CD4-positive, alpha-beta memory T cell (primary cell): ENCODE measurements at regions of chr15 and their contacts with region 1.

Region 1: GRCh38 chr15:85330901-85331588 is 49.4 kb upstream of the AKAP13 start:
- DNase-seq: peak; percentile 65 to 84 (median 67)
- H3K4me3 ChIP-seq: peak overlapping the region; percentile 1 to 55
- H3K4me3 Mint-ChIP-seq: peak overlapping the region; percentile 92 to 98 (median 95)
- H3K27ac ChIP-seq: peak overlapping the region; percentile 62
- H3K27ac Mint-ChIP-seq: peak overlapping the region; percentile 78 to 96 (median 95)
- H3K4me1 ChIP-seq: peaks cover 28% of the 10 kb centered on the region
- H3K4me1 Mint-ChIP-seq: peaks cover 33 to 52% (median 44%) of the 10 kb centered on the region in 4 donors
- H3K27me3 ChIP-seq: no peaks in the 10 kb centered on the region
- H3K27me3 Mint-ChIP-seq: no peaks in the 10 kb centered on the region

Region 2: GRCh38 chr15:85296615-85297402 is 34.2 kb before region 1 on chr15:
- CTCF ChIA-PET with region 1: interaction called, 60 read pairs
- POLR2A ChIA-PET with region 1: interaction called, 17 read pairs
- intact Hi-C with region 1: loop called (anchors 1 kb)
- DNase-seq: peak; percentile 67 to 75 (median 72)
- H3K4me3 ChIP-seq: peak overlapping the region in 1 of 2 donors; percentile 20
- H3K4me3 Mint-ChIP-seq: peak overlapping the region in 7 of 8 donors; percentile 1 to 70 (median 65)
- H3K27ac ChIP-seq: no peak overlapping the region
- H3K27ac Mint-ChIP-seq: peak overlapping the region in 4 of 7 donors; percentile 24 to 73 (median 27)
- H3K4me1 ChIP-seq: peaks cover 6% of the 10 kb centered on the region
- H3K4me1 Mint-ChIP-seq: peaks cover 8 to 15% (median 10%) of the 10 kb centered on the region in 4 donors
- H3K27me3 ChIP-seq: no peaks in the 10 kb centered on the region
- H3K27me3 Mint-ChIP-seq: peaks cover 0 to under 1% of the 10 kb centered on the region in 2 donors

Region 3: GRCh38 chr15:85318048-85318731 is 12.9 kb before region 1 on chr15:
- CTCF ChIA-PET with region 1: interaction called, 59 read pairs
- POLR2A ChIA-PET with region 1: interaction called, 63 read pairs
- intact Hi-C with region 1: loop called (anchors 1 kb)
- DNase-seq: peak in 3 of 5 donors; percentile 10 to 49 (median 29)
- H3K4me3 ChIP-seq: no peak overlapping the region
- H3K4me3 Mint-ChIP-seq: peak overlapping the region in 4 of 8 donors; percentile 35 to 62 (median 51)
- H3K27ac ChIP-seq: no peak overlapping the region
- H3K27ac Mint-ChIP-seq: peak overlapping the region in 6 of 7 donors; percentile 79 to 90 (median 82)
- H3K4me1 ChIP-seq: peaks cover 42% of the 10 kb centered on the region
- H3K4me1 Mint-ChIP-seq: peaks cover 32 to 47% (median 38%) of the 10 kb centered on the region in 4 donors
- H3K27me3 ChIP-seq: no peaks in the 10 kb centered on the region
- H3K27me3 Mint-ChIP-seq: no peaks in the 10 kb centered on the region

Region 4: GRCh38 chr15:85354461-85354860 is 23.4 kb after region 1 on chr15:
- CTCF ChIA-PET with region 1: no interaction called
- POLR2A ChIA-PET with region 1: no interaction called
- intact Hi-C with region 1: no loop called
- DNase-seq: no peak
- H3K4me3 ChIP-seq: no peak overlapping the region
- H3K4me3 Mint-ChIP-seq: no peak overlapping the region
- H3K27ac ChIP-seq: no peak overlapping the region
- H3K27ac Mint-ChIP-seq: no peak overlapping the region
- H3K4me1 ChIP-seq: peaks cover 6% of the 10 kb centered on the region
- H3K4me1 Mint-ChIP-seq: peaks cover 4 to 6% (median 5%) of the 10 kb centered on the region in 4 donors
- H3K27me3 ChIP-seq: no peaks in the 10 kb centered on the region
- H3K27me3 Mint-ChIP-seq: no peaks in the 10 kb centered on the region

Region 5: GRCh38 chr15:85402195-85402881 is 71.3 kb after region 1 on chr15:
- CTCF ChIA-PET with region 1: interaction called, 18 read pairs
- POLR2A ChIA-PET with region 1: interaction called, 3 read pairs
- intact Hi-C with region 1: no loop called
- DNase-seq: no peak
- H3K4me3 ChIP-seq: no peak overlapping the region
- H3K4me3 Mint-ChIP-seq: peak overlapping the region in 4 of 8 donors; percentile 0 to 49 (median 16)
- H3K27ac ChIP-seq: no peak overlapping the region
- H3K27ac Mint-ChIP-seq: peak overlapping the region; percentile 7 to 72 (median 28)
- H3K4me1 ChIP-seq: peaks cover 47% of the 10 kb centered on the region
- H3K4me1 Mint-ChIP-seq: peaks cover 53 to 90% (median 73%) of the 10 kb centered on the region in 4 donors
- H3K27me3 ChIP-seq: no peaks in the 10 kb centered on the region
- H3K27me3 Mint-ChIP-seq: no peaks in the 10 kb centered on the region

Region 6: GRCh38 chr15:85485956-85486567 is 155.0 kb after region 1 on chr15:
- CTCF ChIA-PET with region 1: interaction called, 14 read pairs
- POLR2A ChIA-PET with region 1: no interaction called
- intact Hi-C with region 1: no loop called
- DNase-seq: peak; percentile 65 to 73 (median 70)
- H3K4me3 ChIP-seq: no peak overlapping the region
- H3K4me3 Mint-ChIP-seq: peak overlapping the region in 1 of 8 donors; percentile 12
- H3K27ac ChIP-seq: no peak overlapping the region
- H3K27ac Mint-ChIP-seq: peak overlapping the region in 4 of 7 donors; percentile 1 to 63 (median 22)
- H3K4me1 ChIP-seq: peaks cover 41% of the 10 kb centered on the region
- H3K4me1 Mint-ChIP-seq: peaks cover 49 to 79% (median 65%) of the 10 kb centered on the region in 4 donors
- H3K27me3 ChIP-seq: no peaks in the 10 kb centered on the region
- H3K27me3 Mint-ChIP-seq: no peaks in the 10 kb centered on the region

Region 7: DNA sequence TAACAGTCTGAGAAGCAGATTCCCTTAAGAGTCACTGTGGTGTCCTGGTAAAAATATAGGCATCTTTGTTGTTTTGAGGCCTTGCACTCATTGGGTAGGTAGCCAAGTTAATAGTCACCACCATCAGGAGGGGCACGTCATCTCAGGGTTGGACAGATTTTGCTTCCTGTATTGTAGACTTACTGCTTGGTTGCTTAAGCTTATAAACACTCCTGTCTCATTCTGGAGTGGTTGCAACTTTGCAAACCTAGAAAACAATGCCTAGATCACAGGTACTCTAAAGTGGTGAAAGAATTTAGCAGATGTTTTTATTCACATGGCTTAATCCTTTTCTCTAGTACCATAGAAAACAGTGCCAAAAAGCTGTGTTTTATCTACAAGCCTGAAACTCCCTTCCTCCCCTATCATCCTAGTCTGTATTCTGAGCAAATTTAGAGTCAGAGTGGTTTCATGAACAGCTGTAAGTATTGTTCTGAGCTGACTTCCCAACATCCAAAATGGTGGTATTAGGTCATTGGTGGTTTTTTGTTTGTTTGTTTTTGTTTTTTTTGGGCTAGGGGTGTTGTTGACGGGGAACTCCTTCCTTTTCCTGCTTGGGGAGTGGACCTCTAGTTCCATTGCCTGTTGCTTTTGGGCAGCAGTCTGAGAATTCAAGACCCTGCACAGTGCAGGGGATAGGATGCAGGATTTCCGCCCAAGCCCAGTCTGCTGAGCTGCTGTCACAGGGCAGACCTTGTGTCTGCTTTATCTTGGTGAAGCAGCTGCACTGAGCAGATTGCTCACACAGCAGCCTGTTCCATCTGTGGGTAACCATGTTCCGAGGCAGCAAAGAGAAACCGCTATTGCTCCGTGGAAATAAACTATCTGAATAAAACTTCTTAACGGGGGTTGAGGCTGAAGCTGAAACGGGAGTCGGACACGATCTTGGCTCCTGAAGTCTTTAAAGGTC is 251.4 kb after region 1 on chr15:
- CTCF ChIA-PET with region 1: interaction called, 5 read pairs
- POLR2A ChIA-PET with region 1: interaction called, 3 read pairs
- intact Hi-C with region 1: loop called (anchors 1 kb)
- DNase-seq: peak; percentile 68 to 84 (median 76)
- H3K4me3 ChIP-seq: peak overlapping the region; percentile 74 to 92
- H3K4me3 Mint-ChIP-seq: peak overlapping the region; percentile 87 to 95 (median 89)
- H3K27ac ChIP-seq: peak overlapping the region; percentile 72
- H3K27ac Mint-ChIP-seq: peak overlapping the region; percentile 92 to 99 (median 98)
- H3K4me1 ChIP-seq: peaks cover 79% of the 10 kb centered on the region
- H3K4me1 Mint-ChIP-seq: peaks cover 63 to 82% (median 72%) of the 10 kb centered on the region in 4 donors
- H3K27me3 ChIP-seq: no peaks in the 10 kb centered on the region
- H3K27me3 Mint-ChIP-seq: no peaks in the 10 kb centered on the region